GM10248 (cell line): ENCODE measurements at regions of chr22 and their contacts with region 1.

Region 1: GRCh38 chr22:36481393-36482168 is at the start of gene TXN2:
- DNase-seq: peak; percentile 97
- CTCF ChIP-seq: no peak

Region 2: DNA sequence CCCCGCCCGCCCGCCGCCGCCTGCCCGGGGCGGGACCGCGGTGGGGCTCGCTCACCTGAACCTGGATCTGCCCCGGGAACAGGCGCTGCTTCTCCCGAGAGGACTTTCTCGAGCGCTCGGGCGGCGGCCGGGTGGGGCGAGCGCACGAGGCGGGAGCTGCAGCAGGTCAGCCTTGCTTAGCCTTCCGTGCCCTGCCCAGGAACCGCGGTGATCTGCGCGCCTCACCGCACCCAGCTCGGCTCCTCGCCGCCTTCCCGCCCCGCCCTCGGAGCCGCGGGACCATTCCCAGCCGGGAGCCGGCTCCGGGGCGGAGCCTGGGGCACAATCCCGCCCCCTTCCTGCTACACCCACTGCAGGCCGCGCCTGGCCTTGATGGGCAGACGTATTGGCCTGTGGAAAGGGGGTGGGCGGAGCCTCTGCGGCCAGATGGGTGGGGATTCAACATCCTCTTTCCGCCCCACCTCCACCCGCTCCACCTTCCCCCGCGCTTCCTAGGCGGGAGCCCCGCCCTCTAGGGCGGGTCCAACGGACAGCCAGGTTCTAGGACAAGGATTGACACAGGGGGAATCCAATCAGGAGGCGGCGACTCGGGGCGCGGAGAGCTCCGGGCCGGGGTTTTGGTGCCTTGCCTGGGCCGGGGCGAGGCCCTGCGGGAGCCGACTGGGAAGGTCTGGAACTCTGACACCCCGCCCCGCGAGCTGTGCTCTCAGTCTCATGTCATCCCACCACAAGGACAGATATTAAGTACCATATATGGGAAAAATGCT is 93.6 kb before region 1 on chr22 and contains the start of gene MYH9:
- CTCF ChIA-PET with region 1: no interaction called
- POLR2A ChIA-PET with region 1: interaction called, 13 read pairs
- DNase-seq: peak; percentile 100
- CTCF ChIP-seq: no peak